ENCODE measurements at regions of chr12 and their contacts with region 1.

Region 1: DNA sequence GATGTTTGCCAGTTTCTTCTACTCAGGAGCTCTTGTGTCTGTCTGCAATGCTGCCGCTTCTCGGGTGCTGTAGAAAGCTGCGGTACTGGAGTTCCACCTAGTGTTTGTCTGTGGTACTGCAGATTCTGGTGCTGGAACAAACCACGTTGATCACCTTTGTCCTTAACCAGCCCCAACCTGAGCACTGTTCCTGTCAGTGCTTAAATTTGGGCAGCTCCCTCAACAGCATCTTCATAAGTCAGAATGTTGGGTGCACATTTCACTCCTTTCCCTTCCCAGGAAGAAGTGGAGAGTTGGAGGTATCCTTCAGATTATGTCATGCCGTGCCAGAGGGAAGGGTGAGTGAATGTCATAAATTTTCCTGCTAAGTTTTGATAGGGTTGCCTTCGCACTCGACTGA is 48.7 kb upstream of the LALBA start:
- DNase-seq: peak; percentile 66 to 85 (median 78)
- H3K4me3 ChIP-seq: no peak overlapping the region
- H3K27ac ChIP-seq: no peak overlapping the region
- H3K4me1 ChIP-seq: no peaks in the 10 kb centered on the region
- H3K27me3 ChIP-seq: no peaks in the 10 kb centered on the region

Region 2: GRCh38 chr12:48542300-48542928 is 76.1 kb before region 1 on chr12:
- CTCF ChIA-PET with region 1: interaction called, 53 read pairs
- POLR2A ChIA-PET with region 1: no interaction called
- DNase-seq: peak; percentile 29 to 61 (median 60)
- H3K4me3 ChIP-seq: no peak overlapping the region
- H3K27ac ChIP-seq: no peak overlapping the region
- H3K4me1 ChIP-seq: no peaks in the 10 kb centered on the region
- H3K27me3 ChIP-seq: peaks cover 0 to 7% (median 3%) of the 10 kb centered on the region in 5 experiments

Region 3: GRCh38 chr12:48739618-48740273 is 121.2 kb after region 1 on chr12:
- CTCF ChIA-PET with region 1: no interaction called
- POLR2A ChIA-PET with region 1: no interaction called
- DNase-seq: peak in 2 of 3 donors; percentile 4 to 19
- H3K4me3 ChIP-seq: no peak overlapping the region
- H3K27ac ChIP-seq: no peak overlapping the region
- H3K4me1 ChIP-seq: no peaks in the 10 kb centered on the region
- H3K27me3 ChIP-seq: peaks cover 0 to 14% (median 7%) of the 10 kb centered on the region in 5 experiments